Natural killer cell (primary cell): ENCODE measurements at regions of chr17 and their contacts with region 1.

Region 1: DNA sequence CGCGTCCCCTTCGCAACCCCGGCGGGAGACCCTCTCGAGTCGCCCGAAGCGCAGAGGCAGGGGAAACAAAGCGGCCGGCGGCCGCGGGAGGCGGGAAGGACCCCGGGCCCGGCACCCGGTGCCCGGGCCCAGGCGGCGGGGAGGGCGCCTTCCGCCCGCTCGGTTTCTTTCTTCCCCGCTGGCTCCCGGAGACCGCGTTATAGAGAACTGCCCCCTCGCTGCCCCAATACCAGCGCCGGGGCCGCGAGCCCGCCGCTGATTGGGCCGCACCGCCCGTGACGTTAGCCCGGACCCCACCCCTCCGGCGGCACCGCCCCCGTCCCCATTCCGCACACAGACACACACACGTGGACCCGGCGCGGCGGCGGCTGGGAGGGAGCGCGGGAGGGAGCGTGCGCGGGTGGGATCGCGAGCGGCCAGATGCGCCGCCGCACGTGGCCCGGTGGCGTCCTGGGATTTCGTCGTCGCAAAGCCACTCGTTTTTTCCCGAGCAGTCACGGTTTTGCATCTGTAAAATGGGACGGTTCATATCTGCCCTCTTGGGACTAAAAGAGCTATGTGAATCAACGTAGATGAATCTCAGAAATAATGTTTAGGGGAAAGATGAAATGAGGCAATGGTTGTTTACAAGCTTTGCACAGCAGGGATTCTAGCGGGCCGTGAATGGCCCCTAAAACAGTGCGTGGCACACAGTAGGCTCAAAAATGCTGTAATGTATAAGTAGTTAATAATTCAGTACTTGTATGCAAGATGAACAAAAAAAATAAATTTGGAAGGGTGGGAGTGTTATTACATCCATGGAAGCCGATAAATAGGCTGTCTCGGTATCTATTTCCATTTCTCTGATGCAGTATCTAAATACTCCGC is at the start of gene EPOP:
- DNase-seq: peak; percentile 71 to 90
- ATAC-seq: peak; percentile 83 to 90 (median 89)
- H3K4me3 ChIP-seq: peak within 1 kb of the TSS; percentile 32
- H3K4me3 Mint-ChIP-seq: peak within 1 kb of the TSS; percentile 79
- H3K27ac ChIP-seq: no peak within 1 kb of the TSS
- H3K27ac Mint-ChIP-seq: peak within 1 kb of the TSS in 1 of 2 donors; percentile 52
- H3K4me1 ChIP-seq: peaks cover 20% of the 10 kb centered on the region
- H3K4me1 Mint-ChIP-seq: peaks cover 11 to 23% of the 10 kb centered on the region in 2 donors
- H3K27me3 ChIP-seq: peaks cover 38% of the 10 kb centered on the region
- H3K27me3 Mint-ChIP-seq: peaks cover 17 to 21% of the 10 kb centered on the region in 2 donors
- CTCF ChIP-seq: no peak
- total RNA-seq, gene EPOP: 0.66 to 1.9 (median 1.1) TPM

Region 2: GRCh38 chr17:38735161-38735997 is 60.4 kb after region 1 on chr17:
- intact Hi-C with region 1: loop called (anchors 1 kb)
- DNase-seq: peak; percentile 78 to 85
- ATAC-seq: peak in 2 of 3 donors; percentile 52 to 59
- H3K4me3 ChIP-seq: no peak overlapping the region
- H3K4me3 Mint-ChIP-seq: no peak overlapping the region
- H3K27ac ChIP-seq: no peak overlapping the region
- H3K27ac Mint-ChIP-seq: peak overlapping the region; percentile 89 to 93
- H3K4me1 ChIP-seq: peaks cover 39% of the 10 kb centered on the region
- H3K4me1 Mint-ChIP-seq: peaks cover 46 to 53% of the 10 kb centered on the region in 2 donors
- H3K27me3 ChIP-seq: no peaks in the 10 kb centered on the region
- H3K27me3 Mint-ChIP-seq: no peaks in the 10 kb centered on the region
- CTCF ChIP-seq: peak; percentile 94